ENCODE measurements at regions of chr17 and their contacts with region 1.

Region 1: GRCh38 chr17:57833179-57833939 is 16.5 kb downstream of the MRPS23 start:
- DNase-seq: peak; percentile 75 to 92
- H3K4me3 ChIP-seq: peak overlapping the region; percentile 38 to 44 (median 40)
- H3K27ac ChIP-seq: peak overlapping the region; percentile 64 to 89 (median 82)
- H3K4me1 ChIP-seq: peaks cover 13 to 52% (median 26%) of the 10 kb centered on the region in 4 donors
- H3K27me3 ChIP-seq: no peaks in the 10 kb centered on the region
- CTCF ChIP-seq: peak in 5 of 7 experiments; percentile 75 to 91 (median 81)
- EP300 ChIP-seq: no peak
- POLR2A ChIP-seq: no peak

Region 2: GRCh38 chr17:57130761-57131461 is 702.4 kb before region 1 on chr17:
- intact Hi-C with region 1: loop called (anchors 5 kb)
- DNase-seq: peak; percentile 91 to 93
- H3K4me3 ChIP-seq: peak overlapping the region in 1 of 4 donors; percentile 10
- H3K27ac ChIP-seq: no peak overlapping the region
- H3K4me1 ChIP-seq: peaks cover 0 to 9% (median 4%) of the 10 kb centered on the region in 4 donors
- H3K27me3 ChIP-seq: no peaks in the 10 kb centered on the region
- CTCF ChIP-seq: peak in 5 of 7 experiments; percentile 40 to 92 (median 89)
- EP300 ChIP-seq: no peak
- POLR2A ChIP-seq: no peak